ENCODE measurements at regions of chr20 and their contacts with region 1.

Region 1: DNA sequence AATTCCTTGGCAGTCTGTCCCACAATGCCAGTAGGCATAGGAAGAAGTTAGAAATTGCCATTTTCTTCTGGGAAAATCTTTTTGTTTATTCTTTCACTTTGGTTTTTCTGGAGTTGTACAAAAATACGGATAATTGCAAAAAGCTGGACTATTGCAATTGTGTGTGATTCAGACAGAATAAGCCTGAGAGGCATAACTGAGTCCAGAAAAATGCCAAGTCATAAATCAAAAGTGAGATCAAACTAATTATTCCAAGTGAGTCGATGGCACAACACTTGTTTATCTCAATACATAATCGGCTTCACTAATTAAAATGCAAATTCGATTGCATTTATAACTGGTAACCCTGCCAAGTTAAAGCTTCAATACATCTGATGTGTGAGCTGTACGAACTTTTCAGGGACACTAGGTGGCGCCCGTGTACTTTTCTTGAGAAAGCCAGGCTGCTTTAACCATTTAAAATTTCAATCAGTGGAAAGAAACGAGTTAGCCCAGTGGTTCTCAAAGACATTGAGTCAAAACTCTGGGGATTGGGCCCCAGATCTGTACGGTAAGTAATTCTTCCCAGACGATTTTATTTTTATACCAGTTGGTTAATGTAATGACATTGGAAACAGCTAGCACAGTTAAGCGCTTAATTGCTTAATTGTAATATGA is 102.6 kb downstream of the LAMP5 start:
- DNase-seq: peak; percentile 46
- H3K4me3 Mint-ChIP-seq: no peak overlapping the region
- H3K27ac Mint-ChIP-seq: no peak overlapping the region
- H3K4me1 Mint-ChIP-seq: no peaks in the 10 kb centered on the region
- H3K27me3 Mint-ChIP-seq: no peaks in the 10 kb centered on the region
- CTCF ChIP-seq: peak; percentile 48

Region 2: DNA sequence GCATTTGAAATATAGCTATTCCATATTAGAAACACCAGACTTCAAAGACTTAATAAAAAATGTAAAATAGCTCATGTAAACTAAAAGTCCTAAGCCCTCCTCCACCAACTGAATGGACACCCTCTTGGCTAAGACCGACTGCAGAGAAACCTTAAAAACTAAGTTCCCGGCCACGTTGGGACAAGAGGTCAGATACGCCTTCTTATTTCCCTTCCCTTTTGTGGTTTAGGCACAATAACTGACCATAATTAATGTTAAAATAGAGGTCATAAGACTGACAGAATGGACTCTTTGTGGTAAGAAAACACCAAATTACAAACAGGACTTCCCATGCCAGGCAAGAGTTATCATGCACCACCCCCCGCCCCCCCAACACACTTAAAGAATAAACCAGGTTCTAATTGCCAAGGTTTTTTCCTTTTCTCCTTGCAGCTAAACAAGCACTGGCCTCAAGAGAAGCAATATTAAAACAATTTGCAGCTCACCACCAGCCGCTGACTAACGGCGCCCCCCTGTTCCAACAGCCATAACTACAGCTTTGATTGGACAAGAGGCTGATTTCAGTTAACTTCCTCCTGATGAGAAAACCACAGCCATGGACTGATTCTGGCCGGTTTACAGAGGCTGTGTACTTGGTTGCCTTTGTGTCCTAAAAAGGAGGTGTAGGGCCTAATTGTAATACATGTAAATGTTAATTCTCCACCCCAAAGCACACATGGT is 113.3 kb before region 1 on chr20:
- CTCF ChIA-PET with region 1: no interaction called
- intact Hi-C with region 1: no loop called
- DNase-seq: no peak
- H3K4me3 Mint-ChIP-seq: no peak overlapping the region
- H3K27ac Mint-ChIP-seq: no peak overlapping the region
- H3K4me1 Mint-ChIP-seq: no peaks in the 10 kb centered on the region
- H3K27me3 Mint-ChIP-seq: no peaks in the 10 kb centered on the region
- CTCF ChIP-seq: no peak

Region 3: DNA sequence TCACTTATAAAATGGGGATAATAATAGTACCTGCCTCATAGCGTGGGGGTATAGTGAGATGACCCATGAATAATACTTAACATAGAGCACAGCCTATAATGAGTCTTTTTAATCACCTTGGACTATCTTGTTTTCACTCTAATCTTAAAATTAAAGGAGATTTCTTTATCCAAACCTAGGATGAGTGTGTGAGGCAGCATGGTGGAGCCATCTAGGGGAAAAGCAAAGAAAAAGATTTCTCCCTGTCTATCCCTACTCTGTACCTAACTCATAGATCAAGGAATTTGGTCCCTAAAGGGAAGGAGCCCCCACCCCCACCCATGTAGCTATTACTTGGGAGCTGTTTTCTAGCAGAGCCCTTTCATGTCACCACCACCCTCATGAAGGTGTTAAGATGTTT is 267.1 kb after region 1 on chr20:
- CTCF ChIA-PET with region 1: interaction called, 12 read pairs
- intact Hi-C with region 1: loop called (anchors 1 kb)
- DNase-seq: peak; percentile 5
- H3K4me3 Mint-ChIP-seq: no peak overlapping the region
- H3K27ac Mint-ChIP-seq: no peak overlapping the region
- H3K4me1 Mint-ChIP-seq: no peaks in the 10 kb centered on the region
- H3K27me3 Mint-ChIP-seq: peaks cover 9% of the 10 kb centered on the region
- CTCF ChIP-seq: no peak

Region 4: DNA sequence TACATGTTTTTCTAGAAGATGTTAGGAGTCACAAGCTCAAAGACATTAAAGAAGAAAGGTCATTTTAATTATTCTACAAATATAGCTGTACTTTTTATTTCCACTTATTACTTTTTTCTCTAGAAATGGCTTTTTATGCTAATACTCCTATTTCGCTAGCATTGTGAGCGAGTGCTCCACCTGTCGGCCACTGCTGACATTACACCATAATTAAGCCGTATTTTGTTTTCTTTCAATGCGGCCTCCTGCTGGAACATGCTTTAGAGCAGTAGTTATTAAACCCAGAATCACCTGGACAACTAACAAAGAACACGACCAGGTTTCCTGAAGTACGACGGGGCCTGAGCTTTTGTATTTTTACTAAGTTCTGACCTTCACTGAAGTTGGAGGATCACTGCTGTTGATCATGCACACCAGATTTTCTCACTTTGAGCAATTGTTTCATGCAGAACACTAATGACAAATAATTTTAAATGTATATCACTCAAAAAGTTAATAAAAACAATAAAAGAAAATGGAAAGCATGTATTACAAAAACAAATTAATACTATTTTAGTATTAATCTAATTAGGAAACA is 296.0 kb after region 1 on chr20:
- CTCF ChIA-PET with region 1: interaction called, 4 read pairs
- intact Hi-C with region 1: loop called (anchors 1 kb)
- DNase-seq: peak; percentile 36
- H3K4me3 Mint-ChIP-seq: no peak overlapping the region
- H3K27ac Mint-ChIP-seq: no peak overlapping the region
- H3K4me1 Mint-ChIP-seq: peaks cover 8% of the 10 kb centered on the region
- H3K27me3 Mint-ChIP-seq: no peaks in the 10 kb centered on the region
- CTCF ChIP-seq: peak; percentile 41

Region 5: GRCh38 chr20:9966966-9967365 is 350.0 kb after region 1 on chr20:
- CTCF ChIA-PET with region 1: interaction called, 25 read pairs
- intact Hi-C with region 1: loop called (anchors 1 kb)
- DNase-seq: no peak
- H3K4me3 Mint-ChIP-seq: no peak overlapping the region
- H3K27ac Mint-ChIP-seq: no peak overlapping the region
- H3K4me1 Mint-ChIP-seq: no peaks in the 10 kb centered on the region
- H3K27me3 Mint-ChIP-seq: peaks cover 11% of the 10 kb centered on the region
- CTCF ChIP-seq: peak; percentile 27

Region 6: DNA sequence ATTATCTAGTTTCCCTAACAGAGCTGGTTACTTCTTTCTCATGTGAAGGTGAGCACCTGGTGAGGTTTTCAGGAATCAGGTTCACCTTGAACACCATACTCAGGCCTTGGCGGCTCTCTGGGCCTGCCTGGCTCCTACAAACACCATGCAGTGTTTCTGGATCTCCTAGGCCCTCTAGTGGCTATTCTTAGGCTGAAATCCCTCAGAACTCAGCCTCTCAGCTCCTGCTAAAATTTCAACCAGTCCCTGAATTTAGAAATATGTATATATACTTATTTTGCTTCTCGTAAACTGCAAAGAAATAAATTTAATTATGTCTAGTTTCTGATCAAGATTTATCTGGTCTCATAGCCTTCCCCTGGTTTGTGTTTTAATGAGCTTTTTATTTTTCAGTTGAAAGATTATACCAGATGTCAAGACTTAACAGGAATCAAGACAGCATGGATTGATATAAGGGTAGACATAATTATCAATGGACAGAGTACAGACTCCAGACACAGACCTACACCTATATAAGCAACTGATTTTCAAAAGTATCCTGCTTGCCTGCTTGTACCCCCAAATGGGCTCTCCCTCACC is 473.7 kb after region 1 on chr20:
- CTCF ChIA-PET with region 1: interaction called, 7 read pairs
- intact Hi-C with region 1: loop called (anchors 5 kb)
- DNase-seq: peak; percentile 50
- H3K4me3 Mint-ChIP-seq: no peak overlapping the region
- H3K27ac Mint-ChIP-seq: no peak overlapping the region
- H3K4me1 Mint-ChIP-seq: peaks cover 8% of the 10 kb centered on the region
- H3K27me3 Mint-ChIP-seq: no peaks in the 10 kb centered on the region
- CTCF ChIP-seq: peak; percentile 31

Region 7: DNA sequence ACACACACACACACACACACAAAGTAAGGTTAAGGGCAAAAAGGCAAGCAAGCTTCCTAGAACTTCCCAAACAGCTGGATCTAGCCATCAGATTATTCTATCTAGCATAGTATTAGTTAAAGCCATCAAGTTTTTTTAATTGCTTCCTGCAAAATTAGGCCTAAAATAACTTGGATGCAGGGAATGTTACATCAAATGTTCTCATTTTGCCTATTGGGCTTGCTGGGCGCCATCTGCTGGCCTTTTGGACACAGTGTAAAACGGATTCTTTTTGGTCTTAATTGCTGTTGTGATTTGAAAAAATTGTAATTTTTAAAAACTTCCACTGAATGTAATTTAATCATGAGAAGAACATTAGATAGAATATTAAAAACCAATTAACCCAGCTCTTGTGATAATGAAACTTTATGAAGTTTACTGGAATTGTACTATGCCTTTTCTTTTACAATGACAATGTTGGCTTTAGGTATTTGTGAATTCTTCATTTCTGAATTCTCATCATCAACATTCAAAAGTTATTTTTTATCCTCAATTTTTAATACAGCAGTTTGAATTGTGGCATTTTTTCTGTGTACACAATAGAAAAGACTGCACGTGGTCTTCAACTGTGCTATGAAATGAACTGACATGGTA is 810.2 kb after region 1 on chr20:
- CTCF ChIA-PET with region 1: no interaction called
- intact Hi-C with region 1: loop called (anchors 5 kb)
- DNase-seq: peak; percentile 32
- H3K4me3 Mint-ChIP-seq: no peak overlapping the region
- H3K27ac Mint-ChIP-seq: peak overlapping the region; percentile 57
- H3K4me1 Mint-ChIP-seq: peaks cover 64% of the 10 kb centered on the region
- H3K27me3 Mint-ChIP-seq: no peaks in the 10 kb centered on the region
- CTCF ChIP-seq: peak; percentile 36